Naive thymus-derived CD8-positive, alpha-beta T cell (primary cell): ENCODE measurements at regions of chr17 and their contacts with region 1.

Region 1: GRCh38 chr17:39450847-39451581 is at the start of gene MED1:
- DNase-seq: peak; percentile 78 to 95 (median 90)
- ATAC-seq: peak; percentile 92 to 93
- H3K4me3 Mint-ChIP-seq: peak within 1 kb of the TSS; percentile 93 to 99 (median 98)
- H3K27ac Mint-ChIP-seq: peak within 1 kb of the TSS; percentile 97 to 100 (median 99)
- H3K4me1 Mint-ChIP-seq: peaks cover 5 to 42% (median 28%) of the 10 kb centered on the region in 4 donors
- H3K27me3 Mint-ChIP-seq: no peaks in the 10 kb centered on the region
- polyA plus RNA-seq, gene MED1: 16.8 to 26.9 (median 22.2) TPM

Region 2: DNA sequence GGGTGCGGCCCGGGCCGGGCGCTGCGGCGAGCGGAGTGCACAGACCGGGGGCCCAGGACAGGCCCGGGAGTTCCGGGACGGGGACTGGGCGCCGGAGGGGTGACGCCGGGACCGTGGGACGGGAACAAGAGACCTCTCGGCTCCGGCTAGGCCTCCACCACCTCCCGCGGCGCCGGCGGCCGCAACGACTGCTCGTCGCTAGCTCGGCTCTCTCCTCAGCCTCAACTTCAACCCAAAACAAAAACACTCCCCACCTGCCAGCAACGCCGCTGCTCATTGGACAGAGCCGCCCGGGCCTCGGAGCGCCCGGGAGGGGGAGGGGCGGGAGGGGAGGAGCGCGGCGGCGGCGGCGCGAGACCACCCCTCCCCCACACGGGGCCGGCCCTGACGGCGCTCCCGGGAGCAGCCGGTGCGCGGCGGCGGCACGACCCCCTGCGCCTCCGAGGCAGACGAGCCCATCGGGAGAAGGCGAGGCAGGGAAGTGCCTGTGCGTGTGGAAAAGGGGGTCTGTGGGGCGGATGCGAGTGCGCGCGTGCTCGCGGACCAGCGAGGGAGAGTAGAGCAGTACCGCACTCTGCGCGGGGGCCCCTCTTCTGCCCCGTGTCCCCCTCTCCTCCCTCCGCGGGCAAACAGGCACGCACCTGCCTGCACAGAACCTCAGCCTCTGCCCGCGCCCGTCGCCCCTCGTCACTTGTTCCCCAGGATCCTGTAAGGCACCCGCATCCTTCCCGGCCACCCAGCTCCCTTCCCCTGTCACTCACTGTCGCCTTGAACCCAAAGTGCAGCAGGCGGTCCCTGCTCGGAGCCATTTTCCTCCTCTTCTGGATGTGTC is 49.4 kb before region 1 on chr17 and contains the start of gene FBXL20:
- POLR2A ChIA-PET with region 1: interaction called, 10 read pairs
- DNase-seq: peak; percentile 88 to 98 (median 93)
- ATAC-seq: peak; percentile 76 to 79
- H3K4me3 Mint-ChIP-seq: peak within 1 kb of the TSS; percentile 94 to 99 (median 97)
- H3K27ac Mint-ChIP-seq: peak within 1 kb of the TSS; percentile 95 to 99 (median 96)
- H3K4me1 Mint-ChIP-seq: peaks cover 7 to 51% (median 33%) of the 10 kb centered on the region in 4 donors
- H3K27me3 Mint-ChIP-seq: peaks cover 0 to 1% (median 0%) of the 10 kb centered on the region in 5 donors
- polyA plus RNA-seq, gene FBXL20: 2.6 to 3.4 (median 3.2) TPM